ENCODE measurements at regions of chr9 and their contacts with region 1.

Region 1: DNA sequence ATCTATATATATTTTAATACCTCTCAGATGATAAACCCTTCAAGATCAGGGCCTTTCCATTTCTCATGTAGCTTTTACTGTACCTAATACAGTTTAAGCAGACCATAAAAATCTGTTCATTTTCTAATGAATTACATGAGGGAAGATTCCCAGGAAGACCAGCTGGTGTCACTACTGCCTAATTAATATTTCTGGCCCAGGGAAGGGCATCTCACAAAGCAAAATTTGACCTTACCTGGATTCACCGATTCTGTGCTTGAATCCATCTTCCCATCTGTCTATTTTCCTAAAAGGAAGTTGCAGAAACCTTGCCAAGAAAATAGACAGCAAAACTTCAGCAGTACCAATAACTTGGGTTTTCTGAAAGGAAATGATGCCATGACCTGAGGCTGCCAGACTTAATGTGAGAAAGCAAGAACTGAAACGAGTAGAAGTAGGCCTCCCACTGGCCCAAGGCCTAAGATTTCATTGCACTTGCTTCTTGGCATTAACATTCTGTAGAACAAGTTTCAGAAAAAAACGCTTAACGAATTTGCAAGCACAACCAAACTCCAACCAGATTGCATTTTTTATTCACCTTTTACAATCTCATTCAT is 83.0 kb upstream of the GLIS3 start:
- DNase-seq: peak in 1 of 2 experiments; percentile 37
- H3K4me3 ChIP-seq: no peak overlapping the region
- H3K4me3 Mint-ChIP-seq: no peak overlapping the region
- H3K27ac Mint-ChIP-seq: no peak overlapping the region
- H3K4me1 ChIP-seq: no peaks in the 10 kb centered on the region
- H3K4me1 Mint-ChIP-seq: no peaks in the 10 kb centered on the region
- H3K27me3 ChIP-seq: no peaks in the 10 kb centered on the region
- H3K27me3 Mint-ChIP-seq: no peaks in the 10 kb centered on the region
- CTCF ChIP-seq: peak; percentile 35 to 58

Region 2: DNA sequence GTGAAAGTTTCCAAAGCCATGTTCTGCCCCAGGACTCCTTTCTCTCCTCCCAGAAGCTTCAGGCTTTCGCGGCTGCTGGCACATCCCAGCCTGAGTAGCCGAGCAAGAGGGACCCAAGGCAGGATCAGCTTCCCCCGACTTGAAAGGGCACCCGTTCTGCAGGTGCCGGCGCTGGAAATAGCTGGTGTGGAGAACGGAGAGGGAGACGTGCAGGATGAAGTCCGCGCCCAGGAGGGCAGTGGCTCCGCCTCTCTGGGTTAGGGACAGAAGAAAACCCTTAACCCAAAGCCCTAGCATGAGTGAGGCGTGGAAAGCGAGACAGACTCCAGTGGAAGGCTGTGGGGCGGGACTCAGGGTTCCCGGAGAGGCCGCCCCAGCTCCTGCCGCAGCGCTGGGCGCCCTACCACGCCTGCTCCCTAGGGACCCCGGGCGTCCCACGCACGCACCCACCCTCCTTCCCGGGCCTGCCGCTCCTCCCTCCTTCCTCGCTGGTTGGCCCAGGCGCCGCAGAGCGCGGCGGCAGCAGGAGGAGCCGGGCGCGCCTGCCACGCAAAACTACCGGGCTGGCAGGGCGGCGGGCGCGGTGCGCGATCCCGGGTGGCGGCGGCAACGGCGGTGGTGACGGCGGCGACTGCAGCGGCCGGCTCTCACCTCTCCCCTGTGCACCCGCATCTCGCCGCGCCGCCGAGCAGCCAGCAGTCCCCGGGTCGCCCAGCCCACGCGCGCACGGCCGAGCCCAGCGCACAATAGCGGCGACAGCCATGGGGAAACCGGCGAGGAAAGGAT is 107.3 kb after region 1 on chr9 and contains the start of gene SLC1A1:
- CTCF ChIA-PET with region 1: no interaction called
- POLR2A ChIA-PET with region 1: no interaction called
- intact Hi-C with region 1: loop called (anchors 1 kb)
- DNase-seq: peak; percentile 73 to 83
- H3K4me3 ChIP-seq: peak within 1 kb of the TSS; percentile 69
- H3K4me3 Mint-ChIP-seq: peak within 1 kb of the TSS; percentile 82
- H3K27ac Mint-ChIP-seq: peak within 1 kb of the TSS; percentile 97
- H3K4me1 ChIP-seq: peaks cover 40% of the 10 kb centered on the region
- H3K4me1 Mint-ChIP-seq: peaks cover 17% of the 10 kb centered on the region
- H3K27me3 ChIP-seq: no peaks in the 10 kb centered on the region
- H3K27me3 Mint-ChIP-seq: no peaks in the 10 kb centered on the region
- CTCF ChIP-seq: no peak
- total RNA-seq, gene SLC1A1: 43.3 and 53.1 TPM in 2 replicates

Region 3: DNA sequence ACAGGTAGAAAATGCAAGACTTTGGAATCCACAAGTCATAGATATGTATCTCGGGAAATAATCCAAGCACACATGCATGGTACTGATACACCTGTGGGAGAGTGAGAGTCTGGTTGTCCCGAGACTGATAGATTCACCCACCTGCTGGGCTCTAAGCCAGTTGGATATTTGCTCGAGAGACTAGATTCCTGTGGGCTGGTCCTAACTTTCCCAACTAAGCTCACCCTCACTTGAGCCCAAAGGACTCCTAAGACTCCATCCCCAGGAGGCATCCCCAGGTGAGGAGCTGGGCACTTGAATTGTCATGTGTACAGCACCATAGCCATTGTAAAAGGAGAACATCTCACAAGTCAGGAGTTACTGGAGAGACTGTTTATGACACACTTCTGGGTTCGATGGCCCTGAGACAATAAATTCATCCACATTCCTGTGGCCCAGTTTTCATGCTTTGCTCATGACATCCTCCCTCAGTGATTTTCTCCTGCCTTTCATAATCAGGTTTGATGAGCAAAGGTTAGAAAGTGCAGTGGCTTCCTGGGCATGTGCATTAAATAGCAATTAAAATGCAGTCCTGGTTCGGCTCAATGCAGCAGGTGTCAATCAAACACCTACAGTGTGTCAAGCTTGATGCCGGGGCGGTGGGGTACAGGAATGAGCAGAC is 125.6 kb after region 1 on chr9:
- CTCF ChIA-PET with region 1: no interaction called
- POLR2A ChIA-PET with region 1: no interaction called
- intact Hi-C with region 1: loop called (anchors 5 kb)
- DNase-seq: peak; percentile 62
- H3K4me3 ChIP-seq: no peak overlapping the region
- H3K4me3 Mint-ChIP-seq: peak overlapping the region; percentile 61
- H3K27ac Mint-ChIP-seq: peak overlapping the region; percentile 88
- H3K4me1 ChIP-seq: peaks cover 58% of the 10 kb centered on the region
- H3K4me1 Mint-ChIP-seq: peaks cover 42% of the 10 kb centered on the region
- H3K27me3 ChIP-seq: no peaks in the 10 kb centered on the region
- H3K27me3 Mint-ChIP-seq: no peaks in the 10 kb centered on the region
- CTCF ChIP-seq: no peak

Region 4: DNA sequence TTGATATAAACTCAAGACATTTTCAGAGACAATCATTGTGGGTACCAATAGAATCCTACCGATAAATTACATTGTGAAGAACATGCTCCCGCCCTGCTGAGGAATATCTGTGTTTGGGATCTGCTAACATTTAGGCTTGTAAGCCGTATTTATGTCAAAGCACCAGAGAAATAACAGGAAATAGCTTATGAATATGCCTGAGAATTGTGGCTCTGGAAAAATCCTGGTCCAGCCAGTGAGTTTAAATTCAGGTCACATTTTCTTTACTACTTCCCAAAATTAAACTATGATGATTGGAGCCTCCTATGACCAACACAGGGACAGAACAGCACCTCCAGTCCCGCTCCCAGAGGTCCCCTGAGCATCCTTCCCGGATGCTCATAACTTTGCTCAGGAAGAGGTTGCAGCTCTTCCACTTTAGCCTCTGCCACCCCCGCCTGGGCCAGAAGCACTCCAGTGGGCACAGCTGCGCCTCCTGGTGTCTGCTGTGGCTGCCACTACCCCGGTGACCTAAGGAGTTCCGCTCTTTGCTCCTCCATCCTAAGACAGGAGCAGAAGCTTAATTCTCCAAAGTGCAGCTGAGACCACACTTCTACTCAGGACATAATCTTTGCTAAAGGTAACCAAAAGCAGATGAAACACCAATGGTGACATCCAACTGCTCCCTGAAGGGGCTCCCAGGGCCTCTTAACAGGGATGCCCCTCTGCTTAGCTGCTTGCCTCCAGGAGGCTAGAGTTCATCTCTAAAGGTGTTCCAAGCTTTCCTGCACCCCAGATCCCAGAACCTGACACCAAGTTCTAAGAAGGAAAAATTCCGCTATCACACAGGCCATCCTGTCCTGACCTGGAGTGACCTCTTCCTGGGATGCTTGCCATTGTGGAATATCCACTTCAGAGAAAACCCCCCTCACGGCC is 166.2 kb after region 1 on chr9:
- CTCF ChIA-PET with region 1: interaction called, 6 read pairs
- POLR2A ChIA-PET with region 1: no interaction called
- intact Hi-C with region 1: loop called (anchors 1 kb)
- DNase-seq: peak; percentile 31 to 33
- H3K4me3 ChIP-seq: no peak overlapping the region
- H3K4me3 Mint-ChIP-seq: no peak overlapping the region
- H3K27ac Mint-ChIP-seq: no peak overlapping the region
- H3K4me1 ChIP-seq: peaks cover 5% of the 10 kb centered on the region; the same call in 1 of the 2 replicates
- H3K4me1 Mint-ChIP-seq: peaks cover 1% of the 10 kb centered on the region
- H3K27me3 ChIP-seq: no peaks in the 10 kb centered on the region
- H3K27me3 Mint-ChIP-seq: no peaks in the 10 kb centered on the region
- CTCF ChIP-seq: peak; percentile 26 to 56

Region 5: GRCh38 chr9:4640027-4640426 is 257.2 kb after region 1 on chr9:
- CTCF ChIA-PET with region 1: interaction called, 11 read pairs
- POLR2A ChIA-PET with region 1: no interaction called
- intact Hi-C with region 1: loop called (anchors 1 kb)
- DNase-seq: peak in 1 of 2 experiments; percentile 28
- H3K4me3 ChIP-seq: no peak overlapping the region
- H3K4me3 Mint-ChIP-seq: no peak overlapping the region
- H3K27ac Mint-ChIP-seq: no peak overlapping the region
- H3K4me1 ChIP-seq: no peaks in the 10 kb centered on the region
- H3K4me1 Mint-ChIP-seq: no peaks in the 10 kb centered on the region
- H3K27me3 ChIP-seq: no peaks in the 10 kb centered on the region
- H3K27me3 Mint-ChIP-seq: no peaks in the 10 kb centered on the region
- CTCF ChIP-seq: peak; percentile 21 to 45

Region 6: DNA sequence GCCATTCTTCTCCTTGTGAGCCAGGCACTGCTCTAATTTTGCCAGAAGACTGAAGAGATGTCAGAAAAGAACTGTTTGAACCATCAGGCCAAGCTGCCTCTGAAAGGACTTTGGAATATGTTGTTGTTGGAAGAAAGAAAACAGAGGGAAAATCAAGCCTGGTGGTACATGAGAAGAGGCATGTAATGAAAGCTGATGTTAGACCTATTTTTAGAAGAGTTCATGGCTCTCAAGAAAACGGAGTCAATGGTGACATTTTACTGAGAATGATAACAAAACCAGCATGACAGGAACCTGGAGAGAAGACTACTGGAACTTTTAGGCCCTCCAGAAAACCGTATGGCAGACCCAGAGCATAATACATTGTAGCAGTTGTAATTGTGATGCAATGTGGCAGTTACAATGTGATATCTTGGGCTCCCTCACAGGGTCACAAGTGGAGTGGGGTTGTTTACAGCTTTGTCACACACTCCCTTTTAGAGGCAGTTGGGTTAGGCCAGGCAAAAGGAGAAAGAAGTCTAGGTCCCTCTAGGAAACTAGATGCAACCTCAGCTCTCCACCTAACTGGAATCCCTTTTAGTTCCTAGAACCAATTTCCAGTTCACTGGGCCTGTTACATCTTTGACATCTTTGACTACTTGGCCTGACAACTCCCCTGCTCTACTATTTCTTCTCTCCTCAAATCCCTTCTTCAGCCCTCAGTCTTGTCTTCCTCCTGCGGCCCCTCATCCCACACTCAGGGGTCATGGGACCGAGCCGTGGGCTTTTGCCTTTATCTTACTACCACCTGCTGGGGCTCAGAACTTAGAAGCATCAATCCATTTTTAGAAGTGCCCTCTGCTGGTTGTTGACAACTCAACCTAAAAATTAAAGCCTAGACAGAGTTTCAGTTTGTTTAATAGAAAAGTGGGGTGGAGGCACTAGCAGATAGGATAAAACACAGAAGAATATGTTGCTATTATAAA is 541.0 kb after region 1 on chr9:
- CTCF ChIA-PET with region 1: no interaction called
- POLR2A ChIA-PET with region 1: no interaction called
- intact Hi-C with region 1: loop called (anchors 5 kb)
- DNase-seq: peak in 1 of 2 experiments; percentile 19
- H3K4me3 ChIP-seq: no peak overlapping the region
- H3K4me3 Mint-ChIP-seq: no peak overlapping the region
- H3K27ac Mint-ChIP-seq: no peak overlapping the region
- H3K4me1 ChIP-seq: no peaks in the 10 kb centered on the region
- H3K4me1 Mint-ChIP-seq: no peaks in the 10 kb centered on the region
- H3K27me3 ChIP-seq: no peaks in the 10 kb centered on the region
- H3K27me3 Mint-ChIP-seq: peaks cover 3% of the 10 kb centered on the region
- CTCF ChIP-seq: peak; percentile 32 to 48

Region 7: DNA sequence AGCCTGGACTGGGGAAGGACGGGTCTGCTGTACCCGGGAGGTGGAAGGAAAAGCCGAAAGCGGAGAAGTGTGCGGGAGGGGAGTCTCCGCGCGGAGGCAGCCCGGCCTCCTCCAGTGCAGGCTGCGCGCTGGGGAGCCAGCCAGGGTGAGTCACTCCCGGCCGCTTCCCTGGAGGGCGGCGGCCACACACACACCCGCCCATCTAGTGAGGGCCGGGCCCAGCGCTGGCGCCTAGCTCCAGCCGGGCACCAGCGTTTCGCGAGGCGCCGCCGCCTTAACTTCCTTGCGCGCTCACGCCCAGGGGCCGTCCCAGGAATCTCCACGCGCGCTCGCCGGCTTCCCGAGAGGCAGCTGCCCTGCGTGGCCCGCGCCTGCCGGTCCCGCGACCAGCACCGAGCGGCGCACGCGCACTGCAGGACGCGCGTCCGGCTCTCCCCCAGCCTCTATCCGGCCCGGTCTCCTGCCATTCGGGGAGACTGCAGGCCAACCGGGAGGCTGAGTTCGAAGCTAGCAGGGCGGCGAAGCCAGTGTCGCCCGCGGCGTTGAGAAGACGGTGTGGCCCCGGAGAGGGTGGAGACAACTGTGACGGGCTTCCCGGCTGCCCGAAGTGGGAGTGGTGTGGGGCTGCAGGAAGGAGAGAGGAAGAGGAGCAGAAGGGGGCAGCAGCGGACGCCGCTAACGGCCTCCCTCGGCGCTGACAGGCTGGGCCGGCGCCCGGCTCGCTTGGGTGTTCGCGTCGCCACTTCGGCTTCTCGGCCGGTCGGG is 602.0 kb after region 1 on chr9 and contains the start of gene JAK2:
- CTCF ChIA-PET with region 1: no interaction called
- POLR2A ChIA-PET with region 1: no interaction called
- intact Hi-C with region 1: loop called (anchors 10 kb)
- DNase-seq: peak; percentile 89 to 90
- H3K4me3 ChIP-seq: peak within 1 kb of the TSS; percentile 63
- H3K4me3 Mint-ChIP-seq: peak within 1 kb of the TSS; percentile 76
- H3K27ac Mint-ChIP-seq: peak within 1 kb of the TSS; percentile 87
- H3K4me1 ChIP-seq: peaks cover 3% of the 10 kb centered on the region; the same call in 1 of the 2 replicates
- H3K4me1 Mint-ChIP-seq: peaks cover 15% of the 10 kb centered on the region
- H3K27me3 ChIP-seq: no peaks in the 10 kb centered on the region
- H3K27me3 Mint-ChIP-seq: peaks cover 5% of the 10 kb centered on the region
- CTCF ChIP-seq: peak; percentile 18 to 28
- total RNA-seq, gene JAK2: 0.86 and 1.4 TPM in 2 replicates

Measured in Caco-2 (cell line).